Gastrocnemius medialis (tissue), 4 donors: ENCODE measurements at regions of chr1 and their contacts with region 1.

Region 1: DNA sequence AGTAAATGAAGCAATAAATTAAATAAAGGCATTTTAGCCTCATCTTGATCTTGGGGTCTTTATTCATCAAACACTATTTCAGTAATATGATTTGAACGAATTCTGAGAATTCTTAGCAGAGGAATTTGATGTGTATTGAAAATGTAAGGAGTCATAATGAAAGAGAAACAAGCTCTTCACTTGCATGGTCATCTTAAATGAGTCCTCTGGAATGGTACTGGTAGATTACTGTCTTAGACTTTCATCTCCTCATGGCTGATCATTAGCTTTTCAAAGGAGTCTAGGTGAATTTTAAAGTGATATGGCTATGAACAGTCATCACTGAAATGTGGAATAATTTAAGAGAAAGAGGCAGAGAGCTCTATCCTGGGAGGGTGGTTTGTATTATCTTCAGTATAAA is 30.0 kb downstream of the PRRC2C start:
- DNase-seq: no peak
- ATAC-seq: no peak
- H3K4me3 ChIP-seq: no peak overlapping the region
- H3K27ac ChIP-seq: no peak overlapping the region
- H3K4me1 ChIP-seq: peaks cover 0 to 4% of the 10 kb centered on the region in 2 donors
- H3K27me3 ChIP-seq: no peaks in the 10 kb centered on the region
- CTCF ChIP-seq: no peak
- POLR2A ChIP-seq: no peak

Region 2: DNA sequence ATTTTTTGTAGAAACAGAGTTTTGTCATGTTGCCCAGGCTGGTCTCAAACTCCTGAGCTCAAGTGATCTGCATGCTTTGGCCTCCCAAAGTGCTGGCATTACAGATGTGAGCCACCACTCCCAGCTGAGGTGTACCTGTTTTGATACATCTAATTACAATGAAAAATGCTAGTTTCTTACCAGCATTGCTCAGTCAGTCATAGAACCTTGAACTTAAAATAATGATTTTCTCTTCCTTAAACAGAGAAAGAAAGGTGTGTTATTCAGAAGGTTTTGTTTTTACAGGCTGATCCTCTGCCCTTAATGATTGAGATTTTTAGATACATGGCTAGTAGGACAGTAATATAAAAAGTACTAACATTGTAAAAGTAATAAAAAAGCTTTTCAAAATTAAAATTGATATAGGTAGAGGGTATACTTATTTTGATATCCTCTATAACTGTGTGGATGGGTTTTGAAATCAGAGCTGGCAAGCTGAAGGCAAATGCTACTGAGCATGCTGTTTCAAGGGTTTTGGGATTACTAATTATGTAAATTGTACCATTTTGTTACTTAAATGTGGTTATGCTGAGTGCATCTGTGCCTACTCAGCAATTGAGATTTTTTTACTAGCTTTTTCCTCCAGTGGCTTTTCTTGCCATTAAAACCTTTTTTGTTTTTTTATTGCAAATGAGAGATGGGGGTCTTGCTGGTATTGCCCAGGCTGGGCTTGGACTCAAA is 13.8 kb before region 1 on chr1:
- in situ Hi-C with region 1: no loop called
- intact Hi-C with region 1: no loop called
- DNase-seq: no peak
- ATAC-seq: no peak
- H3K4me3 ChIP-seq: no peak overlapping the region
- H3K27ac ChIP-seq: no peak overlapping the region
- H3K4me1 ChIP-seq: peaks cover 21 to 29% of the 10 kb centered on the region in 2 donors
- H3K27me3 ChIP-seq: no peaks in the 10 kb centered on the region
- CTCF ChIP-seq: no peak
- POLR2A ChIP-seq: no peak

Region 3: GRCh38 chr1:171576144-171576543 is 60.8 kb after region 1 on chr1:
- in situ Hi-C with region 1: no loop called
- intact Hi-C with region 1: loop called (anchors 10 kb)
- DNase-seq: no peak
- ATAC-seq: no peak
- H3K4me3 ChIP-seq: no peak overlapping the region
- H3K27ac ChIP-seq: no peak overlapping the region
- H3K4me1 ChIP-seq: no peaks in the 10 kb centered on the region
- H3K27me3 ChIP-seq: no peaks in the 10 kb centered on the region
- CTCF ChIP-seq: no peak
- POLR2A ChIP-seq: no peak